CD4-positive, alpha-beta memory T cell (primary cell): ENCODE measurements at regions of chr6 and their contacts with region 1.

Region 1: DNA sequence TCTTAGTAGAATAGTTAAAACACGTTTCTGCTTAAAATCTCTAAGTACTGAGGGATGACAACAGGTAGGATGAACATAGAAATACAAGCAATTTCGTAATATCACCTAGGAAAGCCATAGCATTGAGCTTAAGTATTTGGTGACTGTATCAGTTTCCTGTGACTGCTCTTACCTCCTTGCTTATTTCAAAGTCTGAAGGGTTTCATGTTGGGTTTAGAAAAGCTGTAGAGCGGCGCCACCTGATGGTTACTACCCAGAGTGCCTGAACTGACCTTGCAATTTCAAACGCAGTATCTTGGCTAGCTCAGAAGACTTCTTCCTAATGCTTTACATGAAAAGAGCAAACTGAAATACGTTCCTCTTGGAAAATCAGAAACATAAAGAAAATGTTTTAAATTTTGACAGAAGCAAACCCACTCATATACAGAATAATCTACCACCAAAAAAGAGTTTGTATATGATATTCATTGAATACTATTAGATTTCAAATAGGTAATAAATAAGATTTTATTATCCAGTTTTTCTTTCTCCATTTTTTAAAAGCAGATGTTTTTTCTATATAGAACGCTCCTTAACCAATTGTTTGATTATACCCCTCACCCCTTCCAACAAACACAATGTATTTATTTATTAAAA is 82.3 kb upstream of the RIPOR2 start:
- DNase-seq: peak; percentile 77 to 87 (median 79)
- H3K4me3 ChIP-seq: no peak overlapping the region
- H3K4me3 Mint-ChIP-seq: peak overlapping the region in 5 of 8 donors; percentile 21 to 64 (median 40)
- H3K27ac ChIP-seq: no peak overlapping the region
- H3K27ac Mint-ChIP-seq: peak overlapping the region; percentile 74 to 93 (median 88)
- H3K4me1 ChIP-seq: peaks cover 48% of the 10 kb centered on the region
- H3K4me1 Mint-ChIP-seq: peaks cover 36 to 59% (median 38%) of the 10 kb centered on the region in 4 donors
- H3K27me3 ChIP-seq: no peaks in the 10 kb centered on the region
- H3K27me3 Mint-ChIP-seq: no peaks in the 10 kb centered on the region

Region 2: GRCh38 chr6:24581084-24581669 is 436.9 kb before region 1 on chr6:
- CTCF ChIA-PET with region 1: interaction called, 11 read pairs
- POLR2A ChIA-PET with region 1: no interaction called
- intact Hi-C with region 1: loop called (anchors 1 kb)
- DNase-seq: peak; percentile 56 to 74 (median 66)
- H3K4me3 ChIP-seq: no peak overlapping the region
- H3K4me3 Mint-ChIP-seq: no peak overlapping the region
- H3K27ac ChIP-seq: no peak overlapping the region
- H3K27ac Mint-ChIP-seq: no peak overlapping the region
- H3K4me1 ChIP-seq: no peaks in the 10 kb centered on the region
- H3K4me1 Mint-ChIP-seq: peaks cover 0 to 3% (median under 1%) of the 10 kb centered on the region in 4 donors
- H3K27me3 ChIP-seq: no peaks in the 10 kb centered on the region
- H3K27me3 Mint-ChIP-seq: peaks cover 0 to 2% of the 10 kb centered on the region in 2 donors

Region 3: DNA sequence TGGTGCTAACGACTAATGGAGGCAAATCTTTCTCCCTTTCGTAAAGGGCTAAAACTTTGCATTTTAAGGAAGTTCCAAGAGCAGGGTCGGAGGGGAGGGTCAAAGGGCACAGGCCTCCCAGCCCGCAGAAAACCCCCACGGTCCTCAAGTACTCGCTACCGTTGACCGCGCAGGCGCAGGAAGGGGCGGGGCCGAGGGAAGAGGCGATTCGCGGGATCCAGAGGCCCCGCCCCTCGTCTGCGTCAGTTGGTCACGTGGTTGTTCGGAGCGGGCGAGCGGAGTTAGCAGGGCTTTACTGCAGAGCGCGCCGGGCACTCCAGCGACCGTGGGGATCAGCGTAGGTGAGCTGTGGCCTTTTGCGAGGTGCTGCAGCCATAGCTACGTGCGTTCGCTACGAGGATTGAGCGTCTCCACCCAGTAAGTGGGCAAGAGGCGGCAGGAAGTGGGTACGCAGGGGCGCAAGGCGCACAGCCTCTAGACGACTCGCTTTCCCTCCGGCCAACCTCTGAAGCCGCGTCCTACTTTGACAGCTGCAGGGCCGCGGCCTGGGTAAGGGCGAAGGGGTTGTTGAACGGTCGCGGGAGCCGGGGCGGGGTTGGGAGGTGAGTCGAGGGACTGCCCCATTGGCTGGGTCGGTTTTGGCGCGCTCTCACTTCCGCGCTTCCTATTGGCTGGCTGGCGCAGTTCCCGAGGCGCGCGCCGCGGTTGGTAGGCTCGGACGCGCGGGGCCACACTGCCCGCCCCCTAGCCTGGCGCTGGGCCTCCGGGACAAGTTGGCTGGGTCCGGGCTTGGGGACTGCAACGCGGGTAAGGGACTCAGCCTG is 243.1 kb before region 1 on chr6 and contains the start of gene GMNN:
- CTCF ChIA-PET with region 1: interaction called, 3 read pairs
- POLR2A ChIA-PET with region 1: interaction called, 5 read pairs
- intact Hi-C with region 1: loop called (anchors 2 kb)
- DNase-seq: peak; percentile 93 to 97 (median 95)
- H3K4me3 ChIP-seq: peak within 1 kb of the TSS; percentile 95 to 98
- H3K4me3 Mint-ChIP-seq: peak within 1 kb of the TSS; percentile 98 to 99 (median 99)
- H3K27ac ChIP-seq: peak within 1 kb of the TSS; percentile 85
- H3K27ac Mint-ChIP-seq: peak within 1 kb of the TSS; percentile 97 to 98 (median 98)
- H3K4me1 ChIP-seq: peaks cover 30% of the 10 kb centered on the region
- H3K4me1 Mint-ChIP-seq: peaks cover 16 to 31% (median 18%) of the 10 kb centered on the region in 4 donors
- H3K27me3 ChIP-seq: no peaks in the 10 kb centered on the region
- H3K27me3 Mint-ChIP-seq: no peaks in the 10 kb centered on the region
- total RNA-seq, gene GMNN: 6.1 to 6.7 TPM

Region 4: GRCh38 chr6:24855395-24856245 is 162.4 kb before region 1 on chr6:
- CTCF ChIA-PET with region 1: interaction called, 177 read pairs
- POLR2A ChIA-PET with region 1: interaction called, 59 read pairs
- intact Hi-C with region 1: loop called (anchors 1 kb)
- DNase-seq: peak; percentile 76 to 82 (median 77)
- H3K4me3 ChIP-seq: no peak overlapping the region
- H3K4me3 Mint-ChIP-seq: peak overlapping the region in 5 of 8 donors; percentile 1 to 87 (median 26)
- H3K27ac ChIP-seq: peak overlapping the region; percentile 61
- H3K27ac Mint-ChIP-seq: peak overlapping the region; percentile 82 to 92 (median 90)
- H3K4me1 ChIP-seq: peaks cover 53% of the 10 kb centered on the region
- H3K4me1 Mint-ChIP-seq: peaks cover 48 to 58% (median 50%) of the 10 kb centered on the region in 4 donors
- H3K27me3 ChIP-seq: no peaks in the 10 kb centered on the region
- H3K27me3 Mint-ChIP-seq: no peaks in the 10 kb centered on the region

Region 5: GRCh38 chr6:25006565-25007001 is 11.5 kb before region 1 on chr6:
- CTCF ChIA-PET with region 1: interaction called, 16 read pairs
- POLR2A ChIA-PET with region 1: interaction called, 5 read pairs
- intact Hi-C with region 1: no loop called
- DNase-seq: peak in 4 of 5 donors; percentile 30 to 74 (median 42)
- H3K4me3 ChIP-seq: peak overlapping the region in 1 of 2 donors; percentile 15
- H3K4me3 Mint-ChIP-seq: peak overlapping the region; percentile 61 to 82 (median 75)
- H3K27ac ChIP-seq: peak overlapping the region; percentile 58
- H3K27ac Mint-ChIP-seq: peak overlapping the region; percentile 68 to 94 (median 90)
- H3K4me1 ChIP-seq: peaks cover 73% of the 10 kb centered on the region
- H3K4me1 Mint-ChIP-seq: peaks cover 59 to 90% (median 70%) of the 10 kb centered on the region in 4 donors
- H3K27me3 ChIP-seq: no peaks in the 10 kb centered on the region
- H3K27me3 Mint-ChIP-seq: no peaks in the 10 kb centered on the region

Region 6: GRCh38 chr6:25070547-25071366 is 52.7 kb after region 1 on chr6:
- CTCF ChIA-PET with region 1: interaction called, 306 read pairs
- POLR2A ChIA-PET with region 1: interaction called, 7 read pairs
- intact Hi-C with region 1: loop called (anchors 2 kb)
- DNase-seq: peak; percentile 84 to 85 (median 85)
- H3K4me3 ChIP-seq: no peak overlapping the region
- H3K4me3 Mint-ChIP-seq: peak overlapping the region in 7 of 8 donors; percentile 5 to 74 (median 48)
- H3K27ac ChIP-seq: no peak overlapping the region
- H3K27ac Mint-ChIP-seq: peak overlapping the region; percentile 80 to 94 (median 84)
- H3K4me1 ChIP-seq: no peaks in the 10 kb centered on the region
- H3K4me1 Mint-ChIP-seq: peaks cover 4 to 8% (median 6%) of the 10 kb centered on the region in 4 donors
- H3K27me3 ChIP-seq: no peaks in the 10 kb centered on the region
- H3K27me3 Mint-ChIP-seq: no peaks in the 10 kb centered on the region